HCT116 (cell line): ENCODE measurements at regions of chr1 and their contacts with region 1.

Region 1: DNA sequence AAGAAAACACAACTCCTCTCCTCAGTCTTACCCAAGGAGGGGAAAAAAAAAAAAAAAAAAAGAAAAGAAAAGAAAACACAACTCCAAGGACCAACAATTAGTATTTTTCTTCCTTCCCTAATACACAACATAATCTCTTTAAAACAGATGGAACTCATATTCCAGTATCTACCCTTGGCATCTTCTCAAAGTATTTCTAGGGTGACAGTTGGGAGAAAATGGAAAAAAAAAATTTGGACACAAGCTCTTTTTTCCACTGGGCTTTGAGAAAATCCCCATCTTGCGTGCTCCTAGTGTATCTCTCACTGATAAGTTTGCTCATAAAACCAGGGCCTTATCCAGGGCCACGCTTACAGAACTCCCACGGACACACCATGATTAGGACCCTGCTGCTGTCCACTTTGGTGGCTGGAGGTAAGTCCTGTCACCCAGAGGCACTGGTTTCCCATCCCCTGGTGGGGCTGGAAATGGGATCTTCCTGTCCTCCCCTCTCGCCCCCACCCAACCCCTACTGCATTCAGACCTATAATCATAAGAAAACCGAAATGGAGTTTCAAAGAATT is at the start of gene CELA2B:
- DNase-seq: no peak
- ATAC-seq: no peak
- H3K4me3 ChIP-seq: no peak within 1 kb of the TSS
- H3K27ac ChIP-seq: no peak within 1 kb of the TSS
- H3K4me1 ChIP-seq: no peaks in the 10 kb centered on the region
- H3K27me3 ChIP-seq: no peaks in the 10 kb centered on the region
- CTCF ChIP-seq: no peak
- POLR2A ChIP-seq: no peak
- RAD21 ChIP-seq: no peak
- total RNA-seq, gene CELA2B: not detected

Region 2: GRCh38 chr1:15426492-15427279 is 49.1 kb before region 1 on chr1:
- CTCF ChIA-PET with region 1: no interaction called
- POLR2A ChIA-PET with region 1: no interaction called
- RAD21 ChIA-PET with region 1: no interaction called
- intact Hi-C with region 1: no loop called
- DNase-seq: no peak
- ATAC-seq: peak; percentile 67
- H3K4me3 ChIP-seq: no peak overlapping the region
- H3K27ac ChIP-seq: peak overlapping the region; percentile 50; the same call in 1 of the 2 replicates
- H3K4me1 ChIP-seq: peaks cover 7 to 61% of the 10 kb centered on the region in 2 experiments; a peak in 3 of 4 replicates
- H3K27me3 ChIP-seq: no peaks in the 10 kb centered on the region
- CTCF ChIP-seq: no peak
- POLR2A ChIP-seq: no peak
- RAD21 ChIP-seq: no peak

Region 3: GRCh38 chr1:15456313-15456954 is 19.4 kb before region 1 on chr1 and contains the start of gene CELA2A:
- CTCF ChIA-PET with region 1: no interaction called
- POLR2A ChIA-PET with region 1: no interaction called
- RAD21 ChIA-PET with region 1: no interaction called
- intact Hi-C with region 1: loop called (anchors 1 kb)
- DNase-seq: no peak
- ATAC-seq: no peak
- H3K4me3 ChIP-seq: no peak within 1 kb of the TSS
- H3K27ac ChIP-seq: no peak within 1 kb of the TSS
- H3K4me1 ChIP-seq: peaks cover 3 to 10% of the 10 kb centered on the region in 2 experiments; a peak in 3 of 4 replicates
- H3K27me3 ChIP-seq: no peaks in the 10 kb centered on the region
- CTCF ChIP-seq: no peak
- POLR2A ChIP-seq: no peak
- RAD21 ChIP-seq: no peak
- total RNA-seq, gene CELA2A: 1.6 TPM